CD8-positive, alpha-beta T cell (primary cell): ENCODE measurements at regions of chr3 and their contacts with region 1.

Region 1: DNA sequence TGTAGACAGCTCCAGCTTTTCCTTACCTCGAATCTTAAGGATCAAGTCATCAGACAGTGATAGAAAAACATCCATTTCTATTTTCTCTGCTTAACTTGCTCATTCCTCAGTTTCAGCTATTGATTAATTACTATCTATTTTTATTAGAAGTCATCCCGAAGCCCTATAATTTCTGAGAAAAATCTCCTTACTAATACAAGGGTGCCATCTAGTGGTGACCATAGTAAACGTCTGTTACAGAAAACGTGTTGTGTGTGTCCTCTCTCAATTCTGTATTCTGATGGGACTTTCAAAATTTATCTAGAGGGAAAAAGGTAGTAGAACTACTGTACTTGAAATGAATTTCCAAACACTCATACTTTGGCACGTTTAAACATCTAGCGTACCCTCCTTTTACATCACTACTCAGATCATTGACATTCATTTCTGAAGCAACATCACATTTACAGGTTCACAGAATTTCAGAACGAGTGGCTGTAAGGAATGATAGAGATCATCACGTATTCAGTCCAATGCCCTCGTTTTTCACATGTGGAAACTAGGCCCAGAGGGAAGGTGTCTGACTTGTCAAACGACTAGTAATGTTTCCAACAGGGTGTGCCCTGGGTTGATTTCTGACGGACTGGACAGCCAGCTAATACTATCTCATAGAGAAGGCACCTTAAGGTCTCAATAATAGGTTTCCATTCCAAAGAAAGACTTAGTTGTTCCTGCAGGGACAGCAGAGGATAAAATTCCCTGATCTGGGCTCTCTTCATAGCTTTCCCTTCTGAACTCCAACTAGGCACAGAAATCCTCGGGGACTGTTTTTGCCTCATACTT is 25.6 kb downstream of the HACD2 start:
- DNase-seq: peak in 3 of 9 experiments; percentile 12 to 73 (median 64)
- ATAC-seq: no peak
- H3K4me3 ChIP-seq: no peak overlapping the region
- H3K4me3 Mint-ChIP-seq: no peak overlapping the region
- H3K27ac ChIP-seq: no peak overlapping the region
- H3K27ac Mint-ChIP-seq: no peak overlapping the region
- H3K4me1 ChIP-seq: no peaks in the 10 kb centered on the region
- H3K4me1 Mint-ChIP-seq: no peaks in the 10 kb centered on the region
- H3K27me3 ChIP-seq: no peaks in the 10 kb centered on the region
- H3K27me3 Mint-ChIP-seq: no peaks in the 10 kb centered on the region
- CTCF ChIP-seq: peak; percentile 98

Region 2: DNA sequence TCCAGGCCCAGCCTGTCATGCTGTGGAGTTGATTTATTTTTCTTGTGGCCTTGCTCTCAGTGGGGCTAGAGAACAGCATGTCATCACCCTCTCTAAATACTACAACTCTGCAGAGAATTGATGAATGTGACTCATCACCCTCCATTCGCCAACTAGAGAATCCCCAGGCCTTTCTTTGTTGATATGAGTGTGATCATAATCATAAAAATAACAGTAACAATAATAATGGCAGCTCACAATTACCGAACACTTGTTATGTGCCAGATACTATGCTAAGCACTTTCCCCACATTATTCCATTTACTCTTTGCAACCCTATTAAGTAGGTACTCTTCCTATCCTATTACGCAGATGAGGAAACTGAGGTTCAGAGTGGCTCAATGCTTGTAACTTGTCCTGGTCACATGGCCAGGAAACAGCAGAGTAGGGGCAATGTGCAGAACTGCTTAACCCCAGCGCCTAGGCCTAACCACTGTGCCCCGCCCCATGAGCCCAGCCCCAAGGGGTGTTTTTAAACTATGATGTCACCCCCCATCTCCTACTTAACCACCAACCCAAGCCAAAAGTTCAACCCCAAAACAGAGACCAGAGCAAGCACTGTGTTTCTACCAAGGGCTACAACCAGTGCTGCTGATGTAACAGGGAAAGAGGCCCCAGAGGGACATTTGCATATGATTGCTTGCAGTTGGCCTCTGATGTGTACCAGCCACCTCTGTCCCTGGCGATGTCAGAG is 214.9 kb before region 1 on chr3:
- CTCF ChIA-PET with region 1: no interaction called
- POLR2A ChIA-PET with region 1: no interaction called
- intact Hi-C with region 1: no loop called
- DNase-seq: no peak
- ATAC-seq: no peak
- H3K4me3 ChIP-seq: no peak overlapping the region
- H3K4me3 Mint-ChIP-seq: no peak overlapping the region
- H3K27ac ChIP-seq: no peak overlapping the region
- H3K27ac Mint-ChIP-seq: no peak overlapping the region
- H3K4me1 ChIP-seq: no peaks in the 10 kb centered on the region
- H3K4me1 Mint-ChIP-seq: no peaks in the 10 kb centered on the region
- H3K27me3 ChIP-seq: no peaks in the 10 kb centered on the region
- H3K27me3 Mint-ChIP-seq: peaks cover 18% of the 10 kb centered on the region
- CTCF ChIP-seq: no peak

Region 3: GRCh38 chr3:123547881-123548519 is 11.3 kb before region 1 on chr3:
- CTCF ChIA-PET with region 1: interaction called, 18 read pairs
- POLR2A ChIA-PET with region 1: no interaction called
- intact Hi-C with region 1: no loop called
- DNase-seq: no peak
- ATAC-seq: no peak
- H3K4me3 ChIP-seq: no peak overlapping the region
- H3K4me3 Mint-ChIP-seq: no peak overlapping the region
- H3K27ac ChIP-seq: no peak overlapping the region
- H3K27ac Mint-ChIP-seq: no peak overlapping the region
- H3K4me1 ChIP-seq: no peaks in the 10 kb centered on the region
- H3K4me1 Mint-ChIP-seq: no peaks in the 10 kb centered on the region
- H3K27me3 ChIP-seq: no peaks in the 10 kb centered on the region
- H3K27me3 Mint-ChIP-seq: no peaks in the 10 kb centered on the region
- CTCF ChIP-seq: no peak

Region 4: GRCh38 chr3:123627673-123628670 is 68.7 kb after region 1 on chr3:
- CTCF ChIA-PET with region 1: no interaction called
- POLR2A ChIA-PET with region 1: no interaction called
- intact Hi-C with region 1: no loop called
- DNase-seq: no peak
- ATAC-seq: no peak
- H3K4me3 ChIP-seq: no peak overlapping the region
- H3K4me3 Mint-ChIP-seq: no peak overlapping the region
- H3K27ac ChIP-seq: no peak overlapping the region
- H3K27ac Mint-ChIP-seq: no peak overlapping the region
- H3K4me1 ChIP-seq: no peaks in the 10 kb centered on the region
- H3K4me1 Mint-ChIP-seq: no peaks in the 10 kb centered on the region
- H3K27me3 ChIP-seq: peaks cover 0 to 3% of the 10 kb centered on the region in 2 experiments
- H3K27me3 Mint-ChIP-seq: peaks cover 3% of the 10 kb centered on the region
- CTCF ChIP-seq: no peak